Left cardiac atrium (tissue), 4 donors: ENCODE measurements at regions of chr15 and their contacts with region 1.

Region 1: GRCh38 chr15:34693053-34693744 is 61.6 kb downstream of the GJD2 start:
- DNase-seq: no peak
- ATAC-seq: no peak

Region 2: GRCh38 chr15:34628577-34629152 is 64.5 kb before region 1 on chr15:
- intact Hi-C with region 1: loop called in 1 of 2 experiments (anchors 5 kb)
- DNase-seq: no peak
- ATAC-seq: no peak